ENCODE measurements at regions of chr2 and their contacts with region 1.

Region 1: DNA sequence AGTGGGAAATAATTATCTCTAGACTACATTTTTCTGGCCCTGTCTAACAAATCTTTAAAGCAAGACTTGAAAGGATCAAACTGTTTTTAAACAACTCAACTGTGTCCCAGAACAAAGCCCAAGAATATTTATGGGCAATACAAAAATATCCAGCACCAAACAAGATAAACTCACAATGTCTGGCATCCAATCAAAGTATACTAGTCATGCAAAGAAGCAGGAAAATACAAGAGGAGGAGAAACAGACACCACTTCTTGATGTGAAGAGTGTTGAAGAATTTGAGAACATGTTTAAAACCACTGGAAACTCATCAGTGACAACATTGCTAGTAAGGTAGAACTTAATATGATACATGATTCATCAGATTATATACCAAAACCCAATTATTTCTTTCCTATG is 66.1 kb upstream of the CDC42EP3 start:
- DNase-seq: no peak
- H3K4me3 ChIP-seq: no peak overlapping the region
- H3K27ac ChIP-seq: peak overlapping the region in 1 of 2 donors; percentile 15
- H3K4me1 ChIP-seq: peaks cover 0 to 45% (median 12%) of the 10 kb centered on the region in 4 donors
- H3K27me3 ChIP-seq: no peaks in the 10 kb centered on the region
- CTCF ChIP-seq: no peak

Region 2: DNA sequence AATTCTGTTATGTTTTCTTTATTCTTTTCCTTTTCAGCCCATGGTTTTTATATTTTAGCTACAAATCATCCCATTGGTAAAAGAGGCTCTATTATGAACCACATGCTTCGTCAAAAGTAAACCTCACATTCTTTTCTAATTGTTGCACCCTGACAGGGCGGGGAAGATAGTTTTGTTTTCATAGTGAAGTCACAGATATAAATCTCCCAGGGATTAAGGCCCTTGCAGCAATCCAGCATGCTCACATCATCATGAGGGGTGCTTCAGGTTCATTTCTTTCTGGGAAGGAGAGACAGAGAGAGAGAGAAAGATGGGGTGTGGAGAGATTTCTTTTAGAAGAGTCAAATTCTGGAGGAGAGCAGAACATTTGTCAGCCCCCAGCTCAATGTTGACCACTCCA is 58.4 kb after region 1 on chr2:
- intact Hi-C with region 1: loop called (anchors 10 kb)
- DNase-seq: no peak
- H3K4me3 ChIP-seq: no peak overlapping the region
- H3K27ac ChIP-seq: peak overlapping the region; percentile 56 to 58
- H3K4me1 ChIP-seq: peaks cover 0 to 56% (median 22%) of the 10 kb centered on the region in 4 donors
- H3K27me3 ChIP-seq: no peaks in the 10 kb centered on the region
- CTCF ChIP-seq: no peak